ENCODE measurements at regions of chr1 and their contacts with region 1.

Region 1: GRCh38 chr1:201739492-201740085 is 89.4 kb upstream of the IPO9 start:
- DNase-seq: peak; percentile 87
- H3K4me3 Mint-ChIP-seq: peak overlapping the region; percentile 91
- H3K27ac Mint-ChIP-seq: peak overlapping the region; percentile 87
- H3K4me1 Mint-ChIP-seq: peaks cover 46% of the 10 kb centered on the region
- H3K27me3 Mint-ChIP-seq: no peaks in the 10 kb centered on the region
- CTCF ChIP-seq: no peak

Region 2: DNA sequence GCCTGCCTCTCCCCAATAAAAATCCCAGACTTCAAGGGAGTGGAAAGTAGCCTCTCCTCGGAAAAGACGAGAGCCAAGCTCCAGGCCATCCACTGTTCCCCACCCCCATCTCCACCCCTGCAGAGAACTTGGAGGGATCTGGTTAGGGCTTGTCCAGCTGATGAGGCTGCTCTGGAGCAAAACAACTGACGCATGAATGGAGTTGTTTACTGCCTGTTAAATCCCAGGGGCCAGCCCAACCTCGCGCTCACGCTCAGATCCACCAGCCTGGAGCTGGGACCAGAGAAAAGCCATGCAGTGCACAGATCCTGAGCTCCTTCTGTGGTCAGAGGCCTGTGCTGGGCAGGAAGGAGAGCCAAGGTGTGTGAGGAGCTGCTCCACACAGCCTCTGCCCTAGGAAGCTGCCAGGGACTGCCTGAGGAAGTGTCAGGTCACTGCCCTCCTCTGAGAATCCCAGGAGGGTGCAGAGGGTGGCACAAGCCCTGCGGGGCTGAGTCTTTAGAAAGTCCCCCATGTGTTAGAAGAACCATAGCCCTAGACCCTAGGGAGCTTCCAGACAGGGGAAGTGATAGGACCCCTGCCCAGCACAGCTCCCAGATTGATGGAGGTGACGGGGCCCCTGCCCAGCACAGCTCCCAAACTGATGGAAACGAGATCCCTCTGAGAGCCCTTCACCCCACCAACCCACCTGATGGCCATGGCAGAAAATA is 19.6 kb before region 1 on chr1:
- CTCF ChIA-PET with region 1: interaction called, 332 read pairs
- POLR2A ChIA-PET with region 1: interaction called, 163 read pairs
- intact Hi-C with region 1: no loop called
- DNase-seq: no peak
- H3K4me3 Mint-ChIP-seq: no peak overlapping the region
- H3K27ac Mint-ChIP-seq: peak overlapping the region; percentile 52
- H3K4me1 Mint-ChIP-seq: peaks cover 23% of the 10 kb centered on the region
- H3K27me3 Mint-ChIP-seq: no peaks in the 10 kb centered on the region
- CTCF ChIP-seq: no peak

Region 3: DNA sequence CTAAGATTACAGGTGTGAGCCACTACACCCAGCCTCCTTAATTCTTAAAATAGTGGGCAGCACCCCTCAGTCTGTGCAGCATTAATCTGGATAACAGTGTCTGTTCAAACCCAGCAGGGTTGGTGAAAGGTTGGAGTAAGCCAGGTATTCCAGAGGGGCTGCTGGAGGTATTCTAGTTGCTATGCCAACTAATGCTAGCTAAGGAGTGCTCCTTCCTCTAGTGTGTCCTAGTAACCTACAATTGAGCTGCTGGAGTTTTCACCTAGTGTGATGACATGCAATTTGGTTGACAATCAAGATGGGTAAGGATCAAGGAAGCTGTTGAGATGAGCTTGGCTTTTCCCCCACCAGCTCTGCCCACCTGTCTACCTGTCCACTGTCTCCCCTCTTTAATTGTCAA is 10.9 kb before region 1 on chr1:
- CTCF ChIA-PET with region 1: interaction called, 4 read pairs
- POLR2A ChIA-PET with region 1: interaction called, 13 read pairs
- intact Hi-C with region 1: no loop called
- DNase-seq: no peak
- H3K4me3 Mint-ChIP-seq: no peak overlapping the region
- H3K27ac Mint-ChIP-seq: no peak overlapping the region
- H3K4me1 Mint-ChIP-seq: peaks cover 6% of the 10 kb centered on the region
- H3K27me3 Mint-ChIP-seq: no peaks in the 10 kb centered on the region
- CTCF ChIP-seq: no peak

Region 4: DNA sequence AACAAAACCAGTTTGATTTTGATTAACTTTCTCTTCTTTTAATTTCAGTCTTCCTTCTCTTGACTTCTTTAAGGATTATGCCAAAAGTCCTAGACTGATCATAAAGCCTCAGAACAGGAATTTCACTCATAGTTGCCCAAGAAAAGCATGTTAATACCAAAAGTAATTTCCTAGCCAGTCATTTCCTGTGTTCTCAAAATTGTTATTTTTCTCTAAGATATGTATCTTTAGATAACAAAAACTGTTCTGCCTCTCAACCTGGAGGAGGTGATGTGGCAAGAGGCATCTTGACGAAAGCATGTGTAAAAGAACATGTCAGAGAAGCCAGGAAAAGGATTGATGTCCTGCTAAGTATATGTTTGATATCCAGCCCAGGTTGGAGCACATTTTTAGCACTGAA is 11.3 kb after region 1 on chr1:
- CTCF ChIA-PET with region 1: interaction called, 9 read pairs
- POLR2A ChIA-PET with region 1: interaction called, 19 read pairs
- intact Hi-C with region 1: no loop called
- DNase-seq: peak; percentile 83
- H3K4me3 Mint-ChIP-seq: peak overlapping the region; percentile 17
- H3K27ac Mint-ChIP-seq: peak overlapping the region; percentile 80
- H3K4me1 Mint-ChIP-seq: peaks cover 71% of the 10 kb centered on the region
- H3K27me3 Mint-ChIP-seq: no peaks in the 10 kb centered on the region
- CTCF ChIP-seq: no peak

Region 5: GRCh38 chr1:201766131-201766866 is 26.7 kb after region 1 on chr1:
- CTCF ChIA-PET with region 1: interaction called, 18 read pairs
- POLR2A ChIA-PET with region 1: interaction called, 10 read pairs
- intact Hi-C with region 1: no loop called
- DNase-seq: peak; percentile 97
- H3K4me3 Mint-ChIP-seq: peak overlapping the region; percentile 1
- H3K27ac Mint-ChIP-seq: peak overlapping the region; percentile 5
- H3K4me1 Mint-ChIP-seq: peaks cover 49% of the 10 kb centered on the region
- H3K27me3 Mint-ChIP-seq: no peaks in the 10 kb centered on the region
- CTCF ChIP-seq: no peak